Breast epithelium (tissue), 4 donors: ENCODE measurements at regions of chr2 and their contacts with region 1.

Region 1: DNA sequence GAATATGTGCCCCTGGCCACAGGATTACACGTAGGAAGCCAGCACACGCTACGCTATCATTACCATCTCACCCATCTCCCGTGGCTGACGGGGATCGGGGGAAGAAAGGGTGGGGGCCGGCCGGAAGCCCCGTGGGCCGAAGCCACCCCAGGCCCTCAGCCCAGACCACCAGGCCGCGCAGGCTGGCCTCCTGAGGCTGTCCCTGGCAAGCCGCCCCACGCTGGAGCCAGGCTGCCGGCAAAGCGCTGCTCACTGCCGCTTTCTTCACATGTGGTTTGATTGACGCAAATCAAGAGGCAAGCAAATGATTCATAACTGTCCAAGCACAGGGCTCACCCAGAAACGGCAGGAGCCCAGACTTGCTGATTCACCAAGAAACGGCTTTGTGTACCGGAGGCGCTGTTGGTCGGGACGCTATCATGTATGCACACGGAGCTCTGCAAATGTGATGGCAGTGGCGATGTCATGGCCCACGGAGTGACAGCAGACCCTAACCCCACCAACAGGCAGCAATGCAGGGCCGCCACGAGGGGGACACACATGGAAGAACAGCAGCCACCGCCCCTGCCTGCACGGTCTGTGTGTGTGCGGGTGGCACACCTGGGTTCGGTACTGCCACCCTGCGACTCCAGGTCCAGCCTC is 125.7 kb downstream of the HDAC4 start:
- DNase-seq: peak; percentile 47 to 64
- H3K4me3 ChIP-seq: peak overlapping the region; percentile 13 to 58 (median 32)
- H3K27ac ChIP-seq: peak overlapping the region; percentile 58 to 88
- H3K4me1 ChIP-seq: peaks cover 5 to 6% of the 10 kb centered on the region in 2 donors
- H3K27me3 ChIP-seq: no peaks in the 10 kb centered on the region
- CTCF ChIP-seq: no peak
- POLR2A ChIP-seq: no peak

Region 2: DNA sequence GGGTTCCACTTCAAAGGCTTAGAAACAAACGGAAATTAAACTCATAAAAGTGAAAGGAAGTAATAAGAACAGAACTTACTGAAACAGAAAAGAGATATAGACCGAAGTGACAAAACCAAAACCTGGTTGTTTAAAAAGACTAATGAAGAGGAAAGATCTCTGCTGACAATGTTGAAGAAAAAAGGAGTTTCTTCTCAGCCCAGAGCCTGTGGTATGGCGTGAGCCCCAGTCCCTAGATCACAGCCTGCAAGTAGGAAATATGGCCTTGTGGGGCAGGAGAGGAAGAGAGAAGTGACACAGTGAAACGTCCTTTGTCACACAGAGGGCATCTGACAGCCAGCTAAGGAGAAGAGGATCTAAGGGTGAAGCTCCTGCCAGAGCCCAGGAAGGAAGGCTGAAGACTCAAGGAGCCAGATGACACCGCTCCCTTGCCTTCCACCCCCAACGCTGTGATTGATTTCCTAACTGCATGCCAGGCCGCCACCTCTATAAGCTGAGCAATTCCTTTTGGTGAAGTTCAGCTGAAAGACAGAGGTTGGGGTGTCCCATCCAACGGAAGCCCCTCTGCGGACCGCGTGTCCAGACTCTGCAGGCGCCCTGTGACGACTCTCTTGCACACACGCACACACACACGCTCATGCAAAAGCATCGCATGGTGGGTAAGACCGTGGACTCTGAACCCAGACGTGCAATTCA is 15.4 kb before region 1 on chr2:
- intact Hi-C with region 1: loop called (anchors 1 kb)
- DNase-seq: peak in 1 of 2 donors; percentile 12
- H3K4me3 ChIP-seq: no peak overlapping the region
- H3K27ac ChIP-seq: no peak overlapping the region
- H3K4me1 ChIP-seq: peaks cover 3 to 8% of the 10 kb centered on the region in 2 donors
- H3K27me3 ChIP-seq: no peaks in the 10 kb centered on the region
- CTCF ChIP-seq: no peak
- POLR2A ChIP-seq: no peak

Region 3: DNA sequence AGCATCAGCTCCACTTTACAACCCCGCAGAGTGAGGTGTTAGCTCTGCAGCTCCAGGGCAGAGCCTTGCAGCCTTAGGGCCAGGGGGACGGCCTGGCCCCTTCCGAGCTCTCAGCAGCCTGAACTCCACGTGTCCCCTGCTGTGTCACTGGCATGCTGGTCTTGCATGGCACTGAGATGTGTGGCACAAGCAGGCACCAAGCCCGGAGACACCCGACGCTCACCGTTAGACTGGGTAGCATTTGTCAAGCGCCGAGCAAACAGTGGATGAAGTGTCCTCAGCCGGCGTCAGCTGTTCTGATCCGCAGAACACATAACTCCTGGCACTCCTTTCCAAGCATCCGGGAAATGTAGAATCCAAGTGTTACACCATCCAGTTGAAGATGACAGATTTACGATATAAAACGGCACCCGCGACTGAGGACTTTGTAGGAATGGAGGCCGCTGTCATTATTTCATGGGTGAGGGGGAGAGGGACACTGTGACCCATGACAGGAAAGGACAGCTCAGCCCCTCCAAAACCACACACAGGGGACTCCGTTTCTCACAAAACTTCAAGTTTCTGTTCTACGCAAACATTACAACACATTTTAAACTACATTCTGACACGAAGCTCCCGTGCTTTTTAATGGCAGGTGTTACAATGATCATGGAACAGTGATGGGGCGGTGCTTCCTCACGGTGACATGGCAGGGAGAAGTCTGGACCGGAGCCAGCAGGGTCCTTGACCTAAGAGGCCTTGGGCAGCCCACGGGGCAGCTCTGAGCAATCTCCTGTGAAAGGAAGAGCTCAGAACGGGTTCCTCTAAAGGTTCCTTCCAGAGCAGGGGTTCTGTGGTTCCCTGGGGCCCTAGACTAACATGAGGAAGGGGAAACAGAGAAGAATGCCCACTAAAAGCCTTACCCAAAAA is 36.2 kb after region 1 on chr2:
- intact Hi-C with region 1: loop called (anchors 1 kb)
- DNase-seq: no peak
- H3K4me3 ChIP-seq: no peak overlapping the region
- H3K27ac ChIP-seq: no peak overlapping the region
- H3K4me1 ChIP-seq: peaks cover 0 to 4% of the 10 kb centered on the region in 2 donors
- H3K27me3 ChIP-seq: no peaks in the 10 kb centered on the region
- CTCF ChIP-seq: no peak
- POLR2A ChIP-seq: no peak